Activated naive CD4-positive, alpha-beta T cell treated with anti-CD3 and anti-CD28 coated beads for 36 hours (primary cell): ENCODE measurements at regions of chr6 and their contacts with region 1.

Region 1: DNA sequence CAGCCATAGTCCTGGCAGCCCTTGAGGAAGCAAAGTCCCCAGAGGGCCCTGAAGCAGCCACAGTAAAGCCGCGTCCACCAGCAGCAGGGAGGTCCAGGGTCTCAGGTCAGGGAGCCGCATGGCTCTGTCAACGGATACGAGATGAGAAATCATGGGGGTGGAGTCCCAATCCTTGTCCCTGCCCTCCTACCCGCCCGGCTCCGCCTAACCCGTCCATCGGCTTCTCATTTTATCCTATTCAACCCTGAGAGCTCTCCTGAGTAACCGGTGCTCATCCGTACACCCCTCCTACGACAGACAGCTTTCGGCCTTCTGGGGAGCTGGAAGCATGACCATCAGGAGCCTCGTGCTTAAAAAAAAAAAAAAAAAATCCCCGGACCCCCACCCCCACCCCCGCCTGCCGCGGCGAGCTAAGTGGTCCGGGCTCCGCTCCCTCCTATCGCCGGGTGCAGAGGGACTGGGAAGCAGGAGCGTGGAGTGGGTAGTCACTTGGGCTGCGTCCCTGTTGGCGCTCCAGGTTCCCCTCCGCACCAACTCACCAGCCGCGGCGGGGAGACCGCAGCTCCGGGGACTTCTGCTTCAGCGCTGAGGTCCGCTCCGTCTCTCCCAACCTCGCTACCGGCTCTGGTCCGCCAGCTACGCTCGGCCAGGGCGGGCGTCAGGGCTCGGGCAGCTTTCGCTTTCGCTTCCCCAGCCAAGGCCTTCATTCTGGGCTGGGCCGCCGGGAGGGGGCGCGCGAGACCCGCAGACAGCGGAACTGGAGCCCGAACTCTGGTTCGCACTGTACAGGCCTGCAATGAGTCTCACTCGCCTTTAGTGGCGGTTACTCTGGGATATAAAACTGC is at the start of gene TAP2:
- DNase-seq: peak; percentile 98
- H3K4me3 Mint-ChIP-seq: peak within 1 kb of the TSS; percentile 89
- H3K27ac Mint-ChIP-seq: peak within 1 kb of the TSS; percentile 99
- H3K4me1 Mint-ChIP-seq: peaks cover 81% of the 10 kb centered on the region
- H3K27me3 Mint-ChIP-seq: no peaks in the 10 kb centered on the region
- total RNA-seq, gene TAP2: 136 to 138 TPM

Region 2: DNA sequence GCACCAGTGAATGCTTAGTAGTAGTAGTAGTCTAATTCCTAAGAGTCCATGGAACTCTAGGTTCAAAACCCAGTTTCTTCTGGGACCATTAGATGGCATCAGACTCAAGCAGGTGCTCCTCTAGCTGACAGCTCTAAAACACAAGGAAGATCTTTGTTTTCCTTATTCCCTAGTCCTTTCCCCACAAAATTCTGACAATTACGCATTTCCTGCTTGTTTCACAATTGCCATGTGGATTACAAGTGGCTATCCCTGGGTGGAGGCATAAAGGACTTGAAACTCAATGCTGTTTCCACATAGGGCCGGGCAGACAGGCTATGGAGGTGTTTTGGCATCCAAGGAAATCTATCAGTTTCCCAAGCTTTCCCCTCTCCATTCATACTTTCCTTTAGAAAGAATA is 12.4 kb before region 1 on chr6:
- CTCF ChIA-PET with region 1: interaction called, 23 read pairs
- intact Hi-C with region 1: loop called (anchors 1 kb)
- DNase-seq: no peak
- H3K4me3 Mint-ChIP-seq: no peak overlapping the region
- H3K27ac Mint-ChIP-seq: no peak overlapping the region
- H3K4me1 Mint-ChIP-seq: peaks cover 36% of the 10 kb centered on the region
- H3K27me3 Mint-ChIP-seq: no peaks in the 10 kb centered on the region

Region 3: DNA sequence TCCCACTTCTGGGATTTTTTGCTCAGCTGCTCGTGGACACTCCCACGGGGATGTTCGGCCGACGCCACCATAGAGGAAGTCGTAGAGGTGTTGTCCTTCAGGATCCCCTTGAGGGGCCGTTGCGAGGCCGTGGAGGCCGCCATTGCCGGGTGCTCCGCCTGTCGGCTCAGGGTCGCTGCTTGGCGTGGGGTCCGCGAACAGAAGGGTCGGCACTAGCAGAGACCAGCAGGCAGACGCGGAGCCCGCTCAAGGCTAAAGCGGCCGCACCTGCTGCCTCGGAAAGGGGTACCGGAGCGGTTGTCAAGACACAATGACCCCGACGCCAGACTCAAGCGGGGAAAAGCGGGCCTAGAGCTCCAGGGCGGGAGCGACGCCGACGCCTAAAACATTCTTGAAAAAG is 41.4 kb after region 1 on chr6:
- CTCF ChIA-PET with region 1: interaction called, 13 read pairs
- intact Hi-C with region 1: no loop called
- DNase-seq: no peak
- H3K4me3 Mint-ChIP-seq: no peak overlapping the region
- H3K27ac Mint-ChIP-seq: no peak overlapping the region
- H3K4me1 Mint-ChIP-seq: peaks cover 12% of the 10 kb centered on the region
- H3K27me3 Mint-ChIP-seq: no peaks in the 10 kb centered on the region